Sigmoid colon (tissue), 7 donors: ENCODE measurements at regions of chr2 and their contacts with region 1.

Region 1: DNA sequence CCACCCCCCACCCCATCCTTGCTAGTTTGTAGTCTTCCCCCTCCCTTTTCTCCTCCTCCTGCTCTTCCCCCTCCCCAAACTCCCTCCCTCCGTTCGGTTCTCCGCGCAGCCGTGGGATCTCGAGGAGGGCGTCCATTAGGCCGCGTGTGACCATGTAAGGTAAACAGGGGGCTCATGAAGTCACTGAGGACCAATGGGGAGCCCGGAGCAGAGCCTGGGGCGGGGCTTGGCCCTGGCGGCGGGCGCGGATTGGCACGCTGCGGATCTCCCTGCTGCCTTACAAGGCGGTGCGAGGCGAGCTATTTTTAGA is 246 bp upstream of the KLF7 start:
- DNase-seq: peak; percentile 100
- H3K4me3 ChIP-seq: peak overlapping the region; percentile 67 to 92 (median 84)
- H3K27ac ChIP-seq: peak overlapping the region; percentile 96 to 100 (median 100)
- H3K4me1 ChIP-seq: peaks cover 0 to 31% (median 25%) of the 10 kb centered on the region in 4 donors
- H3K27me3 ChIP-seq: no peaks in the 10 kb centered on the region
- CTCF ChIP-seq: no peak
- EP300 ChIP-seq: peak in 2 of 4 donors; percentile 54 to 77
- POLR2A ChIP-seq: no peak

Region 2: DNA sequence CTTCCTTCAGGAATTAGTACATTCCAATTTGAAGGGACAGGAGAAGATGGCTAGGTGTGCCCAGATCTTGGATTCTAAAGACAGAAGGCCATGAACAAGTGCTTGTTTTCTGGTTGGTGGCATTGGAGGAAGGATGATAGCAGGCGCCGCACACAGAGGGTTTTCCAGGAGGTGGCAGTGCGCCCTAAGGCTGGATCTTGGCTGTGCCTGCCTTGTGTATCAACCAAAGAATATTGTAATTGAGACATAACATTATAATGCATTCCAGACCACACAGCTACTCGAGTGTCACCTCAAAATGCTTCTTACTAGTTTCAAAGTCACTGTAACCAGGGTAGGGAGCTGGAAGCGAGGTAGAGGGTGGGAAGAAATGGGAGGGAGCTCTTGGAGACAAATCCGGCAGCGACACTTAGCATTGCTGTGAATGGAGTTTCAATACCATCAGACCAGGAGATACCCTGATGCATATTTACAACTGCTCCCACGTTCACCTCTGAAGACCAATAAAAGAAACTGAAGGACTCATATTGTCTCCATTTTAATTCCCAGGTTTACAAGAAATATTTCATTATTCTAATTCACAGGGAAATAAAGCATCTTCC is 184.2 kb before region 1 on chr2:
- intact Hi-C with region 1: loop called (anchors 2 kb)
- DNase-seq: peak; percentile 88
- H3K4me3 ChIP-seq: no peak overlapping the region
- H3K27ac ChIP-seq: peak overlapping the region in 1 of 4 donors; percentile 32
- H3K4me1 ChIP-seq: peaks cover 0 to 32% (median 18%) of the 10 kb centered on the region in 4 donors
- H3K27me3 ChIP-seq: no peaks in the 10 kb centered on the region
- CTCF ChIP-seq: peak; percentile 60 to 85 (median 82)
- EP300 ChIP-seq: peak in 1 of 4 donors; percentile 9
- POLR2A ChIP-seq: no peak

Region 3: DNA sequence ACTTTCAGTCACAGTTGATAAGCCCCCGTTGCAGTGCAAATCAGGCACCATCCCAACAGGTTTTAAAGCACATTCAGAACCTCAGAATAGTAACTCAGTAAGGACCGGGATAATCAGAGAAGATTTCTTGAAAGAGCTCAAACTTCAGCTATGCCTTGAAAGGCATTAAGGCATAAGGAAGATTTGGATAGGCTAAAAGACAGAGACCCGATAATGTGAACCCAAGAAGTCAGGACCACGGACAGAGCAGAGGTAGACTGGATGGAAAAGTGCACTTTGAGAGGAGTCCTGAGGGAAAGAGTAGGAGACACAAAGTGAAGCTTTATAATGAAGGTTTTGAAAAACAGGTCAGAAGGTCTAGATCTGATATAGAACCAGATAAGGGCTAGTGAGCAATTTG is 36.7 kb after region 1 on chr2:
- intact Hi-C with region 1: no loop called
- DNase-seq: no peak
- H3K4me3 ChIP-seq: no peak overlapping the region
- H3K27ac ChIP-seq: no peak overlapping the region
- H3K4me1 ChIP-seq: no peaks in the 10 kb centered on the region
- H3K27me3 ChIP-seq: no peaks in the 10 kb centered on the region
- CTCF ChIP-seq: no peak
- EP300 ChIP-seq: no peak
- POLR2A ChIP-seq: no peak

Region 4: DNA sequence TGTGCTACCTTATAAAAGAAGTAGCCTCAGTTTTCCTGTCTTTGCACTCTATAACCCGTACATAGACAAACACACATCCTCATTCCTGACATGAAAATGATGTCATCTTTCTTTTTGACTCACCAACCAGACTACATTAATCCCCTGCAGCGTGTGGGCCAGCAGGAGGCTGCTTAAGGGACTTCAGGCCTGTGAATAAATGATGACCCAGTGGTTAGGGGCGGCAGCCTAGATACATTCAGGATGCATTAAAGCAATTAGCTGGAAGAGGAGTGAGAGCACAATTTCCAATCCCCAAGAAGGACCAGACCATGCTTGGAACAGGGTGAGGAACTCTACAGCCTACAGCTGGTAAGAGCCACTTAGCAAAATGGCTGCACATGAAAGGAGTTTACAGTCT is 57.1 kb after region 1 on chr2:
- intact Hi-C with region 1: loop called (anchors 2 kb)
- DNase-seq: no peak
- H3K4me3 ChIP-seq: no peak overlapping the region
- H3K27ac ChIP-seq: no peak overlapping the region
- H3K4me1 ChIP-seq: peaks cover 0 to 43% (median 21%) of the 10 kb centered on the region in 4 donors
- H3K27me3 ChIP-seq: no peaks in the 10 kb centered on the region
- CTCF ChIP-seq: no peak
- EP300 ChIP-seq: no peak
- POLR2A ChIP-seq: no peak

Region 5: GRCh38 chr2:207334624-207335371 is 168.8 kb after region 1 on chr2:
- intact Hi-C with region 1: loop called (anchors 5 kb)
- DNase-seq: peak; percentile 88
- H3K4me3 ChIP-seq: peak overlapping the region in 2 of 4 donors; percentile 21 to 35
- H3K27ac ChIP-seq: peak overlapping the region; percentile 65 to 87 (median 83)
- H3K4me1 ChIP-seq: peaks cover 0 to 25% (median 19%) of the 10 kb centered on the region in 4 donors
- H3K27me3 ChIP-seq: no peaks in the 10 kb centered on the region
- CTCF ChIP-seq: no peak
- EP300 ChIP-seq: peak; percentile 16 to 79 (median 61)
- POLR2A ChIP-seq: no peak

Region 6: GRCh38 chr2:207529330-207530159 is 363.6 kb after region 1 on chr2 and contains the start of gene CREB1:
- intact Hi-C with region 1: loop called (anchors 5 kb)
- DNase-seq: peak; percentile 99
- H3K4me3 ChIP-seq: peak within 1 kb of the TSS; percentile 80 to 94 (median 90)
- H3K27ac ChIP-seq: peak within 1 kb of the TSS; percentile 98 to 100 (median 98)
- H3K4me1 ChIP-seq: peaks cover 0 to 47% (median 38%) of the 10 kb centered on the region in 4 donors
- H3K27me3 ChIP-seq: no peaks in the 10 kb centered on the region
- CTCF ChIP-seq: no peak
- EP300 ChIP-seq: peak in 2 of 4 donors; percentile 57 to 91
- POLR2A ChIP-seq: peak; percentile 23 to 95
- total RNA-seq, gene CREB1: 31.3 to 52.0 (median 47.0) TPM